K562 (cell line): ENCODE measurements at regions of chr17 and their contacts with region 1.

Region 1: GRCh38 chr17:72725433-72726068 is 366.9 kb downstream of the SLC39A11 start:
- DNase-seq: peak; percentile 50 to 76 (median 70)
- ATAC-seq: peak; percentile 87
- H3K4me3 ChIP-seq: no peak overlapping the region
- H3K27ac ChIP-seq: no peak overlapping the region
- H3K4me1 ChIP-seq: 0 out of 5 replicates have a peak, but pooled peaks cover 0 to 2% of the 10 kb centered on the region in 2 experiments
- H3K27me3 ChIP-seq: no peaks in the 10 kb centered on the region
- CTCF ChIP-seq: peak; percentile 75 to 88 (median 84)
- EP300 ChIP-seq: no peak
- POLR2A ChIP-seq: no peak
- RAD21 ChIP-seq: peak; percentile 75 to 92

Region 2: DNA sequence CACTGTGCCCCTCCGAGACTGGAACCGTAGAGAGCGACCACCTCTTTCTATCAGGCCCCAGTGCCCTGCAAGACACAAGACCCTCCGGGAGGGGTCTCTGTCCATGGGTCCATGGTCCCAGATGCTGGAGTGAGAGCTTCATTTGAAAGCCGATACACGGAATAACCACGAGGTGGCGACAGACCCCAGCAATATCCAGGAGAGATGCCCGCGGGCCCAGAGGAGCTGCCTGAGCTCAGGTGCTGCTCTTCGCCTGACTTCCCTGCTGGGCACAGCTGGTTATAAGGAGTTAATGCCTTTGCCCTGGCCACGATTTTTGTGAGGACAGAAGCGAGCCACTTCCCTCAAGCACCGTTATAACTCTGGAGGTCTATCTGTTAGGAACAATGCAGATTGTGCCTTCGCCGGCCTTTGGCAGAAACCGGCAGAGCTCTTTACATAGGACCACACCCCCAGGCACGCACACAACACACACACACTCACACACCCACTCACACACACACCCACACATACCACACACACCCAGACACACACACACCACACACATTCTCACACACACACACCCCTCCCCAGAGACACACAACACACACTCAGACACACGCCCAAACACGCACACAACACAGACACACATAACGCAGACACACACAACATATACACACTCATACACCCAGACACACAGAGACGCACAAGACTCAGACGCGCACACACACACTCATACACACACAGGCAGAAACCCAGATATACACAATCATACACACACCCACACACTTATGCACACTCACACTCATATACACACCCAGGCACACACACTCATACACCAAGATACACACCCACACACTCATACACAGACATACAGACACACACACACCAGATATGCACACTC is 168.4 kb before region 1 on chr17:
- CTCF ChIA-PET with region 1: no interaction called
- POLR2A ChIA-PET with region 1: no interaction called
- in situ Hi-C with region 1: no loop called
- intact Hi-C with region 1: loop called (anchors 2 kb)
- DNase-seq: peak; percentile 67 to 76 (median 74)
- ATAC-seq: peak; percentile 89
- H3K4me3 ChIP-seq: no peak overlapping the region
- H3K27ac ChIP-seq: no peak overlapping the region
- H3K4me1 ChIP-seq: peaks cover 0 to 4% of the 10 kb centered on the region in 2 experiments; a peak in 1 of 5 replicates
- H3K27me3 ChIP-seq: peaks cover 0 to 7% of the 10 kb centered on the region in 2 experiments; a peak in 1 of 5 replicates
- CTCF ChIP-seq: peak; percentile 83 to 86 (median 85)
- EP300 ChIP-seq: no peak
- POLR2A ChIP-seq: no peak
- RAD21 ChIP-seq: peak; percentile 44 to 77

Region 3: DNA sequence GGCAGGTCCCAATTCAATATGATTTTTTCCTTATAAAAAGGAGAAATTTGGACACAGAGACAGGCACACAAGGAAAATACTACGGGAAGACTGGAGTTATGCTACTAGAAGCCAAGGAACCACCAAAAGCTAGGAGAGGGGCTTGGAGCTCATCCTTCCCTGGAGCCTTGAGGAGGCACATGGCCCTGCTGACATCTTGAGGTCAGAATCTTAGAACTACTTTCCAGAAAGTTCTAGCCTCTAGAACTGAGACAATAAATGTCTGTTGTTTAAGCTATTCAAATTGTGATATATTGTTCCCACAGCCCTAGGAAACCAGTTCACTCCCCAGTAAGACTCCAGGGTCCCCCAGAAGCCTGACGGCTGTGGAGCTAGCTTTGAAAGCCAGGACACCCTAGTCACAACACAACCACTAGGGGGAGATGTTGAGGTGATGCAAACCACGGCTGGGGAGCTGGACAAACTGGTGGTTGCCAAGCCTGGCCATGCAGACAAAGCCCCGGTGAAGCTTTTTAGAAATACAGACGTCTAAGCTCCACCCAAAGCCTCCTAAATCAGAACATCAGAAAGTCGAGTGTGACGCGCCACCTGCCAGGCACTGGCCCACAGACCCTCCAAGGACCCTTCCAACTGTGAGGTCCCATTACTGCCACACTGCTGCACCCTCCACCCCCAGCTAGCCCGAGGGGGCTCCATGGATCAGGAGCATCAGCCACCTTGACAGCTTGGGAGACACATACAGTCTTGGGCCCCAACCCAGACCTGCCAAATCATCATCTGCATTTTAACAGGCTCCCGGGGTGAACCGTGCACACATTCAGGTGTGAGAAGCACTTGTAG is 260.6 kb after region 1 on chr17:
- CTCF ChIA-PET with region 1: no interaction called
- POLR2A ChIA-PET with region 1: no interaction called
- in situ Hi-C with region 1: loop called (anchors 10 kb)
- intact Hi-C with region 1: loop called (anchors 5 kb)
- DNase-seq: peak; percentile 82 to 85 (median 84)
- ATAC-seq: peak; percentile 99
- H3K4me3 ChIP-seq: no peak overlapping the region
- H3K27ac ChIP-seq: no peak overlapping the region
- H3K4me1 ChIP-seq: peaks cover 0 to 7% of the 10 kb centered on the region in 2 experiments; a peak in 2 of 5 replicates
- H3K27me3 ChIP-seq: no peaks in the 10 kb centered on the region
- CTCF ChIP-seq: peak; percentile 84 to 89 (median 88)
- EP300 ChIP-seq: no peak
- POLR2A ChIP-seq: no peak
- RAD21 ChIP-seq: peak; percentile 60 to 85

Region 4: GRCh38 chr17:73156166-73156840 is 430.8 kb after region 1 on chr17:
- CTCF ChIA-PET with region 1: no interaction called
- POLR2A ChIA-PET with region 1: no interaction called
- in situ Hi-C with region 1: loop called (anchors 10 kb)
- intact Hi-C with region 1: loop called (anchors 2 kb)
- DNase-seq: peak; percentile 71 to 80 (median 74)
- ATAC-seq: peak; percentile 99
- H3K4me3 ChIP-seq: no peak overlapping the region
- H3K27ac ChIP-seq: no peak overlapping the region
- H3K4me1 ChIP-seq: peaks cover 2 to 10% of the 10 kb centered on the region in 2 experiments; a peak in 2 of 5 replicates
- H3K27me3 ChIP-seq: peaks cover 7 to 17% of the 10 kb centered on the region in 2 experiments; a peak in 4 of 5 replicates
- CTCF ChIP-seq: peak; percentile 81 to 87 (median 85)
- EP300 ChIP-seq: no peak
- POLR2A ChIP-seq: no peak
- RAD21 ChIP-seq: peak; percentile 71 to 92

Region 5: GRCh38 chr17:73255671-73256181 is 530.2 kb after region 1 on chr17:
- CTCF ChIA-PET with region 1: interaction called, 3 read pairs
- POLR2A ChIA-PET with region 1: no interaction called
- in situ Hi-C with region 1: loop called (anchors 5 kb)
- intact Hi-C with region 1: loop called (anchors 2 kb)
- DNase-seq: peak; percentile 66 to 78 (median 74)
- ATAC-seq: peak; percentile 89
- H3K4me3 ChIP-seq: no peak overlapping the region
- H3K27ac ChIP-seq: no peak overlapping the region
- H3K4me1 ChIP-seq: no peaks in the 10 kb centered on the region; a peak in 1 of 5 replicates
- H3K27me3 ChIP-seq: peaks cover 4 to 9% of the 10 kb centered on the region in 2 experiments; a peak in 4 of 5 replicates
- CTCF ChIP-seq: peak; percentile 91 to 97 (median 95)
- EP300 ChIP-seq: no peak
- POLR2A ChIP-seq: no peak
- RAD21 ChIP-seq: peak; percentile 99 to 100

Region 6: GRCh38 chr17:73371285-73371684 is 645.7 kb after region 1 on chr17:
- CTCF ChIA-PET with region 1: interaction called, 14 read pairs
- POLR2A ChIA-PET with region 1: interaction called, 3 read pairs
- in situ Hi-C with region 1: loop called (anchors 5 kb)
- intact Hi-C with region 1: loop called (anchors 1 kb)
- DNase-seq: no peak
- ATAC-seq: no peak
- H3K4me3 ChIP-seq: no peak overlapping the region
- H3K27ac ChIP-seq: no peak overlapping the region
- H3K4me1 ChIP-seq: peaks cover 2 to 9% of the 10 kb centered on the region in 2 experiments; a peak in 3 of 5 replicates
- H3K27me3 ChIP-seq: peaks cover 16 to 29% of the 10 kb centered on the region in 2 experiments
- CTCF ChIP-seq: no peak
- EP300 ChIP-seq: no peak
- POLR2A ChIP-seq: no peak
- RAD21 ChIP-seq: no peak